ENCODE measurements at regions of chr1 and their contacts with region 1.

Region 1: DNA sequence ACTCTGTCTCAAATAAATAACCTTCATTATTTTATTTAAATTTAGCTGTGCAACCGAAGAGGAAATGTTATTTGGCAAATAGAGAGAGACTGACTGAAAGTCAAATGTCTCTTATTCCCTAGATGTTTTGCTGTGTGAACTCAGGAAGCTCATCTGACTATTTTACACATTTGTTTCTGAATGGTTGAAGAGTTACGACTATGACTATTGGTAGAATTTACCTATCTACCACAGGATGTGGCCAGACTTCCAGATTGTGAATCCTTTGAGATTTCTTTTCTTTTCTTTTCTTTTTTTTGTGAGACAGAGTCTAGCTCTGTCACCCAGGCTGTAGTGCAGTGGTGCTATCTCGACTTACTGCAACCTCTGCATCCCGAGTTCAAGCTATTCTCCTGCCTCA is 5.3 kb upstream of the SDE2 start:
- DNase-seq: peak; percentile 41
- ATAC-seq: no peak
- H3K4me3 ChIP-seq: peak overlapping the region in 1 of 5 experiments; percentile 2
- H3K4me3 Mint-ChIP-seq: peak overlapping the region; percentile 63
- H3K27ac ChIP-seq: peak overlapping the region; percentile 39 to 100
- H3K27ac Mint-ChIP-seq: peak overlapping the region; percentile 66
- H3K4me1 ChIP-seq: peaks cover 49 to 54% of the 10 kb centered on the region in 2 donors
- H3K4me1 Mint-ChIP-seq: peaks cover 42% of the 10 kb centered on the region
- H3K27me3 ChIP-seq: no peaks in the 10 kb centered on the region
- H3K27me3 Mint-ChIP-seq: no peaks in the 10 kb centered on the region
- CTCF ChIP-seq: no peak

Region 2: DNA sequence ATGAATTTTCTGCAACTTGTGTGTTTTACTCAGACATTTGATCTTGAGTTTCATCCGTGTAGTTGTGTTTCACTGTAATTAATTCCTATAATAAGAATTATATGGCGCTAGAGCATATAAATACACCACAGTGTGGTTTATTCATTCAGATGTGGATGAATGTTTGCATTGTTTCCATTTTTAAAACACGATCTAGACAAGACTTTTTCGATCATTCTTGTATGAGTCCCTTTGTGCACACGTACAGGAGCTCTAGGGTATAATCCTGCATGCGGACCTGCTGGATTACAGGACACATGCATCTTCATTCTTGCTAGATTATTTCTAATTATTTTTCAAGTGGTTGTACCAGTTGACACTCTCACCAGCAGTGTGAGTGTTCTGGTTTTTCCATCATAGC is 1435.1 kb before region 1 on chr1:
- CTCF ChIA-PET with region 1: no interaction called
- POLR2A ChIA-PET with region 1: no interaction called
- intact Hi-C with region 1: no loop called
- DNase-seq: no peak
- ATAC-seq: no peak
- H3K4me3 ChIP-seq: no peak overlapping the region
- H3K4me3 Mint-ChIP-seq: no peak overlapping the region
- H3K27ac ChIP-seq: no peak overlapping the region
- H3K27ac Mint-ChIP-seq: no peak overlapping the region
- H3K4me1 ChIP-seq: no peaks in the 10 kb centered on the region
- H3K4me1 Mint-ChIP-seq: no peaks in the 10 kb centered on the region
- H3K27me3 ChIP-seq: no peaks in the 10 kb centered on the region
- H3K27me3 Mint-ChIP-seq: peaks cover 13% of the 10 kb centered on the region
- CTCF ChIP-seq: no peak

Region 3: DNA sequence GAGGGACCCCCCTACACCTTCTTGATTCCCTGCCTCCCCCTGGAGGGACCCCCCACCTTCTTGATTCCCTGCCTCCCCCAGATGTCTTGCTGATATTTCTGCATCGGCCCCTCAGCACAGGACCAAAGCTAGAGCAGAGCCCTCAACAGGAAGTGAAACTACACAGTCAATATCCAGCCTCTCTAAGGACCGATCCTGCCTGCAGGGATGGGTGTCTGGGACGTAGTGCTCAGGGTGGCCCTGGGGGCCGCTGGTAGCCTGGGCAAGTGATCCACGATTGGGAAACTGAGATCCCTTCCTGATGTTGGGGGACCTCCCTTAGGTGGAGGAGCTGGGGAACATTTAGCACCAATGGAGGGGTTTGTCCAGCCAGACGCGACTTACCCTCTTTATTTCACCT is 59.4 kb before region 1 on chr1:
- CTCF ChIA-PET with region 1: no interaction called
- POLR2A ChIA-PET with region 1: no interaction called
- intact Hi-C with region 1: no loop called
- DNase-seq: peak; percentile 75
- ATAC-seq: peak; percentile 85
- H3K4me3 ChIP-seq: no peak overlapping the region
- H3K4me3 Mint-ChIP-seq: no peak overlapping the region
- H3K27ac ChIP-seq: no peak overlapping the region
- H3K27ac Mint-ChIP-seq: no peak overlapping the region
- H3K4me1 ChIP-seq: peaks cover 8 to 11% of the 10 kb centered on the region in 2 donors
- H3K4me1 Mint-ChIP-seq: peaks cover 11% of the 10 kb centered on the region
- H3K27me3 ChIP-seq: peaks cover 0 to 15% (median 0%) of the 10 kb centered on the region in 4 experiments
- H3K27me3 Mint-ChIP-seq: peaks cover 21% of the 10 kb centered on the region
- CTCF ChIP-seq: no peak

Region 4: GRCh38 chr1:226029093-226029496 is 24.7 kb after region 1 on chr1:
- CTCF ChIA-PET with region 1: interaction called, 22 read pairs
- POLR2A ChIA-PET with region 1: interaction called, 102 read pairs
- intact Hi-C with region 1: loop called (anchors 1 kb)
- DNase-seq: peak; percentile 90
- ATAC-seq: peak; percentile 92
- H3K4me3 ChIP-seq: peak overlapping the region in 1 of 5 experiments; percentile 9
- H3K4me3 Mint-ChIP-seq: peak overlapping the region; percentile 81
- H3K27ac ChIP-seq: peak overlapping the region; percentile 70 to 87
- H3K27ac Mint-ChIP-seq: peak overlapping the region; percentile 97
- H3K4me1 ChIP-seq: peaks cover 34 to 35% of the 10 kb centered on the region in 2 donors
- H3K4me1 Mint-ChIP-seq: peaks cover 44% of the 10 kb centered on the region
- H3K27me3 ChIP-seq: no peaks in the 10 kb centered on the region
- H3K27me3 Mint-ChIP-seq: no peaks in the 10 kb centered on the region
- CTCF ChIP-seq: no peak

Measured in B cell (primary cell).